ENCODE measurements at regions of chr13 and their contacts with region 1.

Region 1: DNA sequence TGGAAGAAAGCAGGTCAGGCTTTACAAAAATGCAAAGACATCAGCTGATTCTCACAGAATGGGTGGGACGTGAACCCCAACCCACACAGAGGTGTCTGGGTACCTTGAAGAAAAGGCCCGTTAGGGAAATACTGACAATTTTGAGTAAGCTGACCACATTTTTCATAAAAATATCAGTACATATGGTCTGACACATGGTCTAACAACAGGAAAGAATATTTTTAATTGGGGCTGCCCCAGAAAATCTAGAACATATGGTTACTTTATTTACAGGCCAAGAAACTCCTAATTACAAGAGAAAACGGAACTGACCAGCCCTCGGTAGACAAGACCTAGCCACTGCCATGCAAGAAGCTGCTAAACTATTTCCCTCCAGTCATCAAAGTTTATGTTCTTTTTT is 48.7 kb upstream of the ITM2B start:
- DNase-seq: no peak
- ATAC-seq: no peak
- H3K4me3 Mint-ChIP-seq: no peak overlapping the region
- H3K27ac Mint-ChIP-seq: peak overlapping the region; percentile 9
- H3K4me1 Mint-ChIP-seq: peaks cover 59% of the 10 kb centered on the region
- H3K27me3 Mint-ChIP-seq: no peaks in the 10 kb centered on the region

Region 2: GRCh38 chr13:47241446-47241845 is 942.8 kb before region 1 on chr13:
- CTCF ChIA-PET with region 1: no interaction called
- POLR2A ChIA-PET with region 1: no interaction called
- intact Hi-C with region 1: no loop called
- DNase-seq: no peak
- ATAC-seq: no peak
- H3K4me3 Mint-ChIP-seq: no peak overlapping the region
- H3K27ac Mint-ChIP-seq: no peak overlapping the region
- H3K4me1 Mint-ChIP-seq: no peaks in the 10 kb centered on the region
- H3K27me3 Mint-ChIP-seq: peaks cover 2% of the 10 kb centered on the region

Region 3: GRCh38 chr13:47964863-47965262 is 219.4 kb before region 1 on chr13:
- CTCF ChIA-PET with region 1: no interaction called
- POLR2A ChIA-PET with region 1: no interaction called
- intact Hi-C with region 1: no loop called
- DNase-seq: no peak
- ATAC-seq: no peak
- H3K4me3 Mint-ChIP-seq: no peak overlapping the region
- H3K27ac Mint-ChIP-seq: no peak overlapping the region
- H3K4me1 Mint-ChIP-seq: no peaks in the 10 kb centered on the region
- H3K27me3 Mint-ChIP-seq: no peaks in the 10 kb centered on the region

Region 4: DNA sequence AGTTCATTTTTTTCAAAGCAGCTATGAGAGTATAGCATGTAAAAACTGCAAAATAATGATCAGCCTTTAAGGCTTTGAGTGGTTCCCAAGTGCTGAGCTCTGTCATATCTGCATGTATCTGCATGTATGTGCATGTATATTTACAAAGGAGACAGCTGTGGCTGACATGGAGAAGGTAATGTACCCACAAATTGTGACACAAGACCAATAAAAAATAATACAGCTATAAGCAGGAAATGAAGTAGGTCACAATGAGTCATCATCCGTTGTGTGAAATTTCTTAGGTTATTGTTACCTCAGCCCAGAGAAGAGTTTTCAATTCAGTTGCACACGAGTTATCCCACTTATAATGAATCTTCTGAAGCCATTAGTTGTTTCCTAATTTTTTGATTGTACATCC is 28.4 kb before region 1 on chr13:
- CTCF ChIA-PET with region 1: interaction called, 3 read pairs
- POLR2A ChIA-PET with region 1: no interaction called
- intact Hi-C with region 1: loop called in 1 of 2 experiments (anchors 1 kb)
- DNase-seq: peak; percentile 26
- ATAC-seq: peak; percentile 78
- H3K4me3 Mint-ChIP-seq: peak overlapping the region; percentile 54
- H3K27ac Mint-ChIP-seq: peak overlapping the region; percentile 96
- H3K4me1 Mint-ChIP-seq: peaks cover 87% of the 10 kb centered on the region
- H3K27me3 Mint-ChIP-seq: no peaks in the 10 kb centered on the region

Region 5: GRCh38 chr13:48210178-48210577 is 25.9 kb after region 1 on chr13:
- CTCF ChIA-PET with region 1: interaction called, 4 read pairs
- POLR2A ChIA-PET with region 1: no interaction called
- intact Hi-C with region 1: loop called in 1 of 2 experiments (anchors 1 kb)
- DNase-seq: no peak
- ATAC-seq: peak; percentile 96
- H3K4me3 Mint-ChIP-seq: no peak overlapping the region
- H3K27ac Mint-ChIP-seq: no peak overlapping the region
- H3K4me1 Mint-ChIP-seq: peaks cover 24% of the 10 kb centered on the region
- H3K27me3 Mint-ChIP-seq: peaks cover 13% of the 10 kb centered on the region

Measured in activated CD4-positive, alpha-beta T cell treated with anti-CD3 and anti-CD28 coated beads for 36 hours (primary cell).